ENCODE measurements at regions of chr9 and their contacts with region 1.

Region 1: DNA sequence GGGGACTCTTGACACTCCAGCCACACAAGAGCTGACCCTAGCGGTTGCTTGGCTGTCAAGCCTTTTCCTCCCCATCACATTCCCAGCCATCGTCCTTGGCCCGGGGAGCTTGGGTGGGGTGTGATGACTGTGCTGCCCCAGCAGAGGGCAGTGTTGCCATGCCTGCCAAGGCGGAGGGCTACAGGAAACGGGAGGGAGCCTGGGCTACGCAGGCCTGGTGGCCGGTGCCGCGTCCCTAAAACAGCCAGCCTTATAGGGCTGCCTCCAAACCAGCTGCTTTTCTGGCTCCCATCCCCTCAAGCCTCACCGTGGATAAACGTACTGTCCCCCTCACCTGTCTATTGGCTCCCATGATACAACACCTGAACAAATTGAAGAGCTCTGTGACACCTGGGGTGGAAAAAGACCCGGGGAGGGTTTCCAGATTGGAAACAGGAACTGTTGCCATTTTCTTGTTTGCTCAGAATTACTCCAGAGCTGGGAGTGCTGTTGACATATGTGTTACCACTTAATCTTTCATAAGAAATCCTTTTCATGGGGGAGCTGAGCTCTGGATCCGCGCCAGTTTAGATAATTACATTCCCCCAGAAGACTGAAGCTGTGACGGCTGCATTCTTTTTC is 72.8 kb upstream of the ASTN2 start:
- DNase-seq: peak; percentile 65
- CTCF ChIP-seq: peak; percentile 95

Region 2: DNA sequence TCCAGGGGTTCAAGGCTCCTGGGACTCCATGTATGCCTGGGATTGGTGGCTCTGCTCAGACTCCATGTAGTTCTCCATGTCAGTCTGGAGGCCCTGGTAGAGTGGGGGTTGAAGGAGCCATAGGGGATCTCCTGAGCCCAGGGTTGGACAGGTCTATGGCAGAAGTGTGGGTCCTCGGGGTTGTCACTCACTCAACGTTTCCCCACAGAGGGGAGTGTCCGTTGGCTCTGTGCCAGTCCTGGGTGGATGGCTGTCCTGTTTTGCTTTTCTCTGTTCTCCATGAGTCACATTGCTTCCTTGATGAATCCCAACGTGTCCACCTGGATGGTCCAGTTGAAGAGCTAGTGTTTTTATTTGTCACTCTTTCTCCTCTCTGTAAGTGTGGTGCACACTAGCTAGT is 21.0 kb after region 1 on chr9:
- CTCF ChIA-PET with region 1: interaction called, 14 read pairs
- POLR2A ChIA-PET with region 1: no interaction called
- DNase-seq: no peak
- CTCF ChIP-seq: no peak

Region 3: GRCh38 chr9:117516676-117517632 is 29.3 kb after region 1 on chr9:
- CTCF ChIA-PET with region 1: interaction called, 14 read pairs
- POLR2A ChIA-PET with region 1: no interaction called
- DNase-seq: no peak
- CTCF ChIP-seq: no peak

Region 4: GRCh38 chr9:117555964-117556629 is 68.4 kb after region 1 on chr9:
- CTCF ChIA-PET with region 1: interaction called, 29 read pairs
- POLR2A ChIA-PET with region 1: no interaction called
- DNase-seq: peak; percentile 52
- CTCF ChIP-seq: peak; percentile 58

Measured in GM10248 (cell line).